Caco-2 (cell line): ENCODE measurements at regions of chr10 and their contacts with region 1.

Region 1: DNA sequence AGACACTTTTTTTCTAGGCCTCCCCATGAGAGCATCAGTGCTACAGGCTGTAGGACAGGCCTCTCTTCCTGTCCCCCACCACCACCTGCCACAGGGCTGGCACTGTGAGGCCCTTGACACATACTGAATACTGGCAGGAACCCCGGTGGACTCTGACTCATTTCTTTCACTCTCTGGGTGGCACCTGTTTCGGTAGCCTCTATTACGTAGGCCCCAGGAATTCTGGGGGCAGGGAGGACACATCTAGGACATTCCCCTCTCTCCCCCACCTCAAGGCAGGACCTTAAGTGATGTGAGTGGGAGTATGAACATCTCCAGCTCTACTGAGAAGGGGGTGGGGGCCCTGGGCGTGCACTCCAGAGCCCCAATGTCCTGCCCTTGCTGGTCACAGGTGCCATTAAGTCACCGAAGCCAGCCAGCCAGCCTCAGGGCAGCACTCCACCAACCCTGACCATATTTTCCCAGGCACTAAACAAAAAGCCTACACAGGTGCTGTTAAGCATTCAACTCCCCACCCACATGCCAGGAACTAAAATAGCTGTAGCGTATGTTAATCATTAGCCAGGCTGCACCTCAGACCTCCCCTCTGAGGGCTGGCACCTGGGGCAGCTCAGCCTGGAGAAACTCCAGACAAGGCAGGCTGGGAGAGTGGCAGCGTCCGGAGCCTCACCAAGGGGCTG is 8.9 kb downstream of the ANXA11 start:
- DNase-seq: peak; percentile 85
- H3K4me3 ChIP-seq: no peak overlapping the region
- H3K4me3 Mint-ChIP-seq: peak overlapping the region; percentile 56
- H3K27ac Mint-ChIP-seq: peak overlapping the region; percentile 86
- H3K4me1 ChIP-seq: peaks cover 62% of the 10 kb centered on the region
- H3K4me1 Mint-ChIP-seq: peaks cover 44% of the 10 kb centered on the region
- H3K27me3 ChIP-seq: no peaks in the 10 kb centered on the region
- H3K27me3 Mint-ChIP-seq: no peaks in the 10 kb centered on the region
- CTCF ChIP-seq: no peak

Region 2: GRCh38 chr10:80064120-80064886 is 132.1 kb before region 1 on chr10:
- CTCF ChIA-PET with region 1: no interaction called
- POLR2A ChIA-PET with region 1: no interaction called
- intact Hi-C with region 1: no loop called
- DNase-seq: no peak
- H3K4me3 ChIP-seq: no peak overlapping the region
- H3K4me3 Mint-ChIP-seq: no peak overlapping the region
- H3K27ac Mint-ChIP-seq: no peak overlapping the region
- H3K4me1 ChIP-seq: peaks cover 20% of the 10 kb centered on the region
- H3K4me1 Mint-ChIP-seq: peaks cover 17% of the 10 kb centered on the region
- H3K27me3 ChIP-seq: no peaks in the 10 kb centered on the region
- H3K27me3 Mint-ChIP-seq: no peaks in the 10 kb centered on the region
- CTCF ChIP-seq: no peak

Region 3: DNA sequence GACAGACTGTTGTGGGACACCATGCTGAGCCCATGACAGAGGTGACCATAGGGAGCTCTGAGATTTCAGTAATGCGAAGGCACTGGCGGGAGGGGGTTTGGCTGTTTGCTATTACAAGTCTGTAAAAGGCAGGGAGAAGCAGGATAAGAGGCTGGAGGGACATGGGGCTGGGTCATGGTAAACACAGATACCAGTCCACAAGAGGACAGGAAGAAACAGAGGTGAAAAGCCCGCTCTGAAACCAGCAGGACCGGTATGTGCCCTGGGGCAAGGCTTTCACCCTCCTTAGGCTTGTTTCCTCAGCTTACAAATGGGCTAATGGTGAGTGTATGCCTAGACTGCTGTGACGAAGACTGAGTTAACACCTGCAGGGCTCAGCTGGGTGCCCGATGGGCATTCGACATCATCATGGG is 25.2 kb before region 1 on chr10:
- CTCF ChIA-PET with region 1: no interaction called
- POLR2A ChIA-PET with region 1: no interaction called
- intact Hi-C with region 1: loop called (anchors 2 kb)
- DNase-seq: peak; percentile 57 to 59
- H3K4me3 ChIP-seq: no peak overlapping the region
- H3K4me3 Mint-ChIP-seq: no peak overlapping the region
- H3K27ac Mint-ChIP-seq: peak overlapping the region; percentile 77
- H3K4me1 ChIP-seq: peaks cover 2% of the 10 kb centered on the region
- H3K4me1 Mint-ChIP-seq: peaks cover 20% of the 10 kb centered on the region
- H3K27me3 ChIP-seq: no peaks in the 10 kb centered on the region
- H3K27me3 Mint-ChIP-seq: no peaks in the 10 kb centered on the region
- CTCF ChIP-seq: no peak

Region 4: DNA sequence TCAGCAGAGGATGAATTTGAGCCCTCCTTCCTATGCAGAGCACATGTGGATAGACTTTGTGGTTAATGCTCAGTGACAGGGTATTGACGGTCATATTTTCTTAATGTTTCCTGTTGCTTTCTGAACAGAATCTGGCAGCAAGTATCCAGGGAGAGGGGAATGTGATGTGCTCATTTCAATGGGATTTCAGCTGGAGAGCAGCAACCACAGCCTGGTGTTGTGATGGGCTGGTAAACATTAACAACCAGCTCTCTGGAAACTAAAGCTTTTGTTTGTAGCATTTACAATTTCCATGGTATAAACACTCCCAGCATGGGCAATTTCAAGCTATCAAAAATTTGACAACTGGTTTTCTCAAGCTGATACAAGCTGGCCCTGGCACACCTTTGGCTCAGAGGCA is 557.2 kb after region 1 on chr10:
- CTCF ChIA-PET with region 1: no interaction called
- POLR2A ChIA-PET with region 1: no interaction called
- intact Hi-C with region 1: no loop called
- DNase-seq: no peak
- H3K4me3 ChIP-seq: no peak overlapping the region
- H3K4me3 Mint-ChIP-seq: no peak overlapping the region
- H3K27ac Mint-ChIP-seq: no peak overlapping the region
- H3K4me1 ChIP-seq: no peaks in the 10 kb centered on the region
- H3K4me1 Mint-ChIP-seq: no peaks in the 10 kb centered on the region
- H3K27me3 ChIP-seq: no peaks in the 10 kb centered on the region
- H3K27me3 Mint-ChIP-seq: peaks cover 3% of the 10 kb centered on the region
- CTCF ChIP-seq: no peak